H1 (cell line): ENCODE measurements at regions of chr11 and their contacts with region 1.

Region 1: GRCh38 chr11:117885777-117886176 is 9.3 kb upstream of the FXYD6 start:
- DNase-seq: peak in 1 of 2 experiments; percentile 40
- H3K4me3 ChIP-seq: no peak overlapping the region
- H3K27ac ChIP-seq: no peak overlapping the region
- H3K4me1 ChIP-seq: peaks cover 0 to 10% (median 2%) of the 10 kb centered on the region in 4 experiments; a peak in 3 of 7 replicates
- H3K27me3 ChIP-seq: no peaks in the 10 kb centered on the region; a peak in 1 of 7 replicates
- CTCF ChIP-seq: no peak
- EP300 ChIP-seq: no peak
- POLR2A ChIP-seq: no peak
- RAD21 ChIP-seq: no peak

Region 2: GRCh38 chr11:117900121-117900648 is 14.4 kb after region 1 on chr11:
- CTCF ChIA-PET with region 1: interaction called, 12 read pairs
- POLR2A ChIA-PET with region 1: no interaction called
- DNase-seq: no peak
- H3K4me3 ChIP-seq: no peak overlapping the region
- H3K27ac ChIP-seq: no peak overlapping the region
- H3K4me1 ChIP-seq: no peaks in the 10 kb centered on the region; a peak in 1 of 7 replicates
- H3K27me3 ChIP-seq: peaks cover 0 to 2% (median 0%) of the 10 kb centered on the region in 4 experiments; a peak in 1 of 7 replicates
- CTCF ChIP-seq: no peak
- EP300 ChIP-seq: no peak
- POLR2A ChIP-seq: no peak
- RAD21 ChIP-seq: no peak